ENCODE measurements at regions of chr2 and their contacts with region 1.

Region 1: GRCh38 chr2:102301867-102302362 is 9.4 kb upstream of the IL1RL1 start:
- DNase-seq: peak; percentile 63
- H3K4me3 Mint-ChIP-seq: peak overlapping the region; percentile 4
- H3K27ac Mint-ChIP-seq: peak overlapping the region; percentile 47
- H3K4me1 Mint-ChIP-seq: peaks cover 27% of the 10 kb centered on the region
- H3K27me3 Mint-ChIP-seq: peaks cover 7% of the 10 kb centered on the region

Region 2: GRCh38 chr2:102286041-102286440 is 15.9 kb before region 1 on chr2:
- CTCF ChIA-PET with region 1: interaction called, 11 read pairs
- POLR2A ChIA-PET with region 1: no interaction called
- DNase-seq: no peak
- H3K4me3 Mint-ChIP-seq: no peak overlapping the region
- H3K27ac Mint-ChIP-seq: no peak overlapping the region
- H3K4me1 Mint-ChIP-seq: peaks cover 11% of the 10 kb centered on the region
- H3K27me3 Mint-ChIP-seq: no peaks in the 10 kb centered on the region

Measured in activated CD4-positive, alpha-beta T cell treated with anti-CD3 and anti-CD28 coated beads, Interleukin-2, amount 10 ng/mL, durations not matched to agents 7 days and 5 days (primary cell).